Activated CD4-positive, alpha-beta memory T cell treated with anti-CD3 and anti-CD28 coated beads for 36 hours (primary cell): ENCODE measurements at regions of chr1 and their contacts with region 1.

Region 1: DNA sequence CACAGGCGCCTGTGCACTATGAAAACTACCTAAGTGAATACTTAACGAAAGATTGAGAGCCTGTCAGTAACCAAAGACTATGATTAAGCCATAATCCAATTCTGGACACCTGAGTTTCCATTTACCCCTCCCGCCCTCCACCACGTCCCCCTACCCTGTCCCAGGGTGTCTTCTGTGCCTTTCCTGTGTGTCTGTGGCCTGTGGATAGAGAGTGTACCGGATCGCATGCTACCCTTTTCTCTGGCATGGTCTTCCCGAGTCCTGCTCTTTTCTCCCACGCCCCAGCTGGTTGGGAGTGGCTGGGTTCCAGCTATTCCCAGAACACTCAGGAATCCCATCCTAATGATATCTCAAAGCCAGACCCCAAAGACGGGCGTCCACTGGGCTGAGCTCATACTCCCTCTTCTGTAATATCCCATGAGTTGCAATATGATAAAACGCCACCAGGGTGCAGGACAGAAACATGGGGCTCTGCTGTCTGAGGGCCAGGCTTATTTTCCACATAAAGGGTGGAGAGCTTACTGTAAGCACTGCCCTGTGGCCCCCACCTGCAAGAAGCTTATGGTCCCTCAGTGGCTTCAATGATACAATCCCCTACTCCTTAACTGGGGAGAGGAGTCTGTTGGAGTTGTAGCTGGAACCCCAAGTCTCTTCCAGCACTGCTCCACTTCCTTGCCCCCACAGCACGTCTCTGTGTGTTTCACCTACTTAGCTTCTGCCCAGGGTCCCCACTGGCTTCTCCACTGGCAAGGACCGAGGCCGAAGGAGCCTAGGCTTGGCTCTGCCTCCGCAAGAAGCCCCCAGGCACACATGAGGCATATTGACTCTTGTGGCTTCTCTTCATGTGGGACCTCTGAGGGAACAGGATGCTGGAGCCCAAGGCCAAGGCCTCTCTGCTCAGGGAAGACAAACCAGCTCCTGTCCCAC is 17.6 kb upstream of the ALX3 start:
- DNase-seq: peak; percentile 52
- H3K4me3 Mint-ChIP-seq: no peak overlapping the region
- H3K27ac Mint-ChIP-seq: no peak overlapping the region
- H3K4me1 Mint-ChIP-seq: peaks cover 12% of the 10 kb centered on the region
- H3K27me3 Mint-ChIP-seq: peaks cover 44% of the 10 kb centered on the region

Region 2: GRCh38 chr1:110053557-110054428 is 34.3 kb before region 1 on chr1:
- CTCF ChIA-PET with region 1: interaction called, 10 read pairs
- POLR2A ChIA-PET with region 1: no interaction called
- intact Hi-C with region 1: no loop called
- DNase-seq: peak; percentile 79
- H3K4me3 Mint-ChIP-seq: no peak overlapping the region
- H3K27ac Mint-ChIP-seq: no peak overlapping the region
- H3K4me1 Mint-ChIP-seq: no peaks in the 10 kb centered on the region
- H3K27me3 Mint-ChIP-seq: no peaks in the 10 kb centered on the region

Region 3: DNA sequence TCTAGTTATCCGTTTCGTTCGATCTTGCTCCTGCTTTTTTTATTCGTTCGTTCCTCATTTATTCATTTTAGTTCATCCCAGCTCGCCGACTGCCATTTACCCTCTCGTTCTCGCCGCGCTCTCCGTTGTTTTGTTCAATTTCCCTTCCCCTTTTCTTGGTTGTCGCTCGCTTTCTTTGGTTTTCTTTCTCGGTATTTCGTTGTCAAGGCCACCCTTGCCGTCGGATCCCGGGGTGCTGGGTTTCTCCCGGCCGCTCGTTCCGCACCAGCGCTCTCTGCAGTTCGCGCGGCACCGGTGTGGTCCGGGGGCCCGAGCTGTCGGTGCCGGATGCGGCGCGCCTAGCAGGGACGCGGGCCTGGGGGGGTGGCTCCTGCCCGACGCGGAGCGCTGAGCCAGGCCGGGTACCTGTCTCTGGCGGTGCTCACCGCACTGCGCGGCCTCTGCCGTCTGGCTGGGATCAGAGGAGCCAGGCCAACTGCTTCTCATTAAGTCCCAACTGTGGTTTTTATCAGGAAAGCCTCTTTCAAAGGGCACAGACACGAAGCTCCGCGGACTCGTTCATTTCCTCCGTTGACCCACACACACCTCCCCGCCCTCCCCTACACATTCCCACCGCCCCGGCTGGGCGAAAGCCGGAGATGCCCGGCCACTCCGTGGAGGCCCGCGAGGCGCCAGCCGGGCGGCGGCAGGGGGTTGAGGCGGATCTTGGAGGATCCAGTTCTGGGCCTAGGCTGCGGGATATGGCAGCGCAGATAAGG is 19.2 kb before region 1 on chr1:
- CTCF ChIA-PET with region 1: interaction called, 11 read pairs
- POLR2A ChIA-PET with region 1: no interaction called
- intact Hi-C with region 1: loop called (anchors 2 kb)
- DNase-seq: peak; percentile 32
- H3K4me3 Mint-ChIP-seq: peak overlapping the region; percentile 13
- H3K27ac Mint-ChIP-seq: no peak overlapping the region
- H3K4me1 Mint-ChIP-seq: peaks cover 18% of the 10 kb centered on the region
- H3K27me3 Mint-ChIP-seq: peaks cover 62% of the 10 kb centered on the region

Region 4: GRCh38 chr1:110097887-110098681 is 10.0 kb after region 1 on chr1:
- CTCF ChIA-PET with region 1: interaction called, 137 read pairs
- POLR2A ChIA-PET with region 1: no interaction called
- intact Hi-C with region 1: no loop called
- DNase-seq: no peak
- H3K4me3 Mint-ChIP-seq: no peak overlapping the region
- H3K27ac Mint-ChIP-seq: no peak overlapping the region
- H3K4me1 Mint-ChIP-seq: no peaks in the 10 kb centered on the region
- H3K27me3 Mint-ChIP-seq: peaks cover 5% of the 10 kb centered on the region